ENCODE measurements at regions of chr11 and their contacts with region 1.

Region 1: GRCh38 chr11:27698872-27699474 is 1.3 kb downstream of the BDNF start:
- DNase-seq: peak; percentile 97
- H3K4me3 ChIP-seq: peak overlapping the region; percentile 40
- H3K27ac ChIP-seq: no peak overlapping the region
- H3K4me1 ChIP-seq: peaks cover 27% of the 10 kb centered on the region
- H3K27me3 ChIP-seq: peaks cover 97% of the 10 kb centered on the region
- CTCF ChIP-seq: peak; percentile 100

Region 2: DNA sequence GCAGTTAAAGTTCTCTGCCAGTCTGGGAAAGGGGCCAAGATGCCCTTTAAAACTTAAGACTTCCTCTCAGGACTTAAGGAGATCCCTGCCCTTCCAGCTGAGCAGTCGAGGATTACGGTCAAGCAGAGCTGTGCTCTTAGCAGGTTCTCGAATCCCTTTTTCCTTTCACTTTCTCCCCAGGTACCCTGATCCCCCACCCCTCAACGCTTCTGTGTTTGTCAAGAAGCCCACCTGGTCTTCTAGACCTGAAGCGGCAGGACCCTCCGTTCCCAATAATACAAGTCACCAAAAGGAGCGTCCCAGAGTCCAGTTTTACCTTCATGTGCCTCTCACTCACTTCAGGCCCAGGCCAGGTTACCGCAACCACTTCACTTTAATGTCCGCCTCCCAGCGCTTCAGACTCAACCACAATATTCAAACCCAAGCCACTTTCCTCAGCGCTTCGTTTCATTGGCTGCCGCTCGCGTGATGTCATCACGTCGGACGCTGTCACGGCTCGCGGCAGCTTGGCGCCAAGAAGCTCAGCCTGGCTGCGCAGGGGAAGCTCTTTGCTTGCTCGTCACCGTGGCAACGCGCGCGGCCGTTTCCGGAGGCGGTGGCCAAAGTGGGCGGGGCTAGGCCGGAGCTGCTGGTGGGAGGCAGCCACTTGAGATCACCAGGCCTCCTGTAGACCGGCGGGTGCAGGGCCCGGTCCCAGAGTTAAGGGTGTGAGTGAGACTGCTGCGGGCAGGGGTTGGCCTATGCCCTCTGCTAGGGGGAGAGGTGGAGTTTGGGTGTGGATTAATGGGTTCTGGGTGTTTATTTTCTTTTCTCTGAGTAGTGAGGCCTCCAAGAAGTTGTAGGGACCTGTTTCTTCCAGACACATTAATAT is 409.0 kb after region 1 on chr11 and contains the starts of genes KIF18A and METTL15:
- CTCF ChIA-PET with region 1: interaction called, 3 read pairs
- POLR2A ChIA-PET with region 1: no interaction called
- intact Hi-C with region 1: loop called (anchors 5 kb)
- DNase-seq: peak; percentile 100
- H3K4me3 ChIP-seq: peak within 1 kb of the TSS; percentile 57
- H3K27ac ChIP-seq: peak within 1 kb of the TSS; percentile 86
- H3K4me1 ChIP-seq: peaks cover 59% of the 10 kb centered on the region
- H3K27me3 ChIP-seq: no peaks in the 10 kb centered on the region
- CTCF ChIP-seq: no peak
- total RNA-seq, gene KIF18A: 103 and 117 TPM in 2 replicates
- total RNA-seq, gene METTL15: 31.3 and 36.6 TPM in 2 replicates

Region 3: DNA sequence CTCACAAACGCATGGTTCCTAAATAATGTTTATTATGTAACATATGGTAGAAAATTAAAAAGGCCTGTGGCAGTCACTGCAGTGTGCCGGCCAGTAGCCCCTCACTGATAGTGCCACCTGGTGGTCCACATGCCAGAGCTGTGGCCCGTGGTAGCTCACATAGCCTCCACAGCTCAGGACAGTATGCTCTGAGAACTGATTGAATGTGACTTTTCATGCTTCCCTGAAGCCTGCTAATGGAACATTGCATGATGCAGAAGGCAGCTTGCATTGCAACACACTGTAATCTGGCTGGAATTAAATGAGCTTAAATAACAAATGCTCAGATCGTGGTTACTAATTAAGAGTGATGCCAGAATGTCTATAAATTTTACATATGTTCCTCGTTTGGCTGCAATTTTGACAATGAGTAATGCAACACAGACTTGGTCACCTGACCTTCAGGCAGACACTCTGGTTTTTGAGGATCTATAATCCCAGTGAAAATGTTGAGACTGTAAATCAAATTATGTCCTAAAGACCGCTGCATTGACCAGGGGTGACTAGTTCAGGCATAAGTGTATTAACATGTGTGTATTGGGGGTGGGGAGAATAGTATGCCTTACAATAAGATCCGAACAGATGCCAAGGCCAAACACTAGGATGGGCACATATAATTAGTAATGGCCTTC is 975.6 kb after region 1 on chr11:
- CTCF ChIA-PET with region 1: interaction called, 8 read pairs
- POLR2A ChIA-PET with region 1: no interaction called
- intact Hi-C with region 1: loop called (anchors 2 kb)
- DNase-seq: peak; percentile 83
- H3K4me3 ChIP-seq: no peak overlapping the region
- H3K27ac ChIP-seq: peak overlapping the region; percentile 2
- H3K4me1 ChIP-seq: peaks cover 16% of the 10 kb centered on the region
- H3K27me3 ChIP-seq: no peaks in the 10 kb centered on the region
- CTCF ChIP-seq: peak; percentile 97

Region 4: DNA sequence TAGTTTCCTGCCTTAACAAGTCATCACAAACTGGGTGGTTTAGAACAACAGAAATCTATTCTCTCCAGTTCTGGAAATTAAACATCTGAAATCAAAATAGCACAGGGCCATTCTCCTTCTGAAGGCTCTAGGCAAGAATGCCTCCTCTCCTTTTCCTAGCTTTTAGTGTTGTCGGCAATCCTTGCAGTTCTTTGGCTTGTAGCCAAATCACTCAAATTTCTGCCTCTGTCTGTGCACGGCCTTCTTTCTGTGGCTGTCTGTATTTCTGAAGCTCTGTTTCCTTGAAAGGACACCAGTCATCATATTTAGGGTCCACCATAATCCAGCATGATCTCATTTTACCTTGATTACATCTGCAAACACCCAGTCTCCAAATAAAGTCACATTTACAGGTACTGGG is 1204.7 kb after region 1 on chr11:
- CTCF ChIA-PET with region 1: no interaction called
- POLR2A ChIA-PET with region 1: no interaction called
- intact Hi-C with region 1: loop called (anchors 10 kb)
- DNase-seq: peak; percentile 78
- H3K4me3 ChIP-seq: no peak overlapping the region
- H3K27ac ChIP-seq: no peak overlapping the region
- H3K4me1 ChIP-seq: no peaks in the 10 kb centered on the region
- H3K27me3 ChIP-seq: no peaks in the 10 kb centered on the region
- CTCF ChIP-seq: no peak

Region 5: DNA sequence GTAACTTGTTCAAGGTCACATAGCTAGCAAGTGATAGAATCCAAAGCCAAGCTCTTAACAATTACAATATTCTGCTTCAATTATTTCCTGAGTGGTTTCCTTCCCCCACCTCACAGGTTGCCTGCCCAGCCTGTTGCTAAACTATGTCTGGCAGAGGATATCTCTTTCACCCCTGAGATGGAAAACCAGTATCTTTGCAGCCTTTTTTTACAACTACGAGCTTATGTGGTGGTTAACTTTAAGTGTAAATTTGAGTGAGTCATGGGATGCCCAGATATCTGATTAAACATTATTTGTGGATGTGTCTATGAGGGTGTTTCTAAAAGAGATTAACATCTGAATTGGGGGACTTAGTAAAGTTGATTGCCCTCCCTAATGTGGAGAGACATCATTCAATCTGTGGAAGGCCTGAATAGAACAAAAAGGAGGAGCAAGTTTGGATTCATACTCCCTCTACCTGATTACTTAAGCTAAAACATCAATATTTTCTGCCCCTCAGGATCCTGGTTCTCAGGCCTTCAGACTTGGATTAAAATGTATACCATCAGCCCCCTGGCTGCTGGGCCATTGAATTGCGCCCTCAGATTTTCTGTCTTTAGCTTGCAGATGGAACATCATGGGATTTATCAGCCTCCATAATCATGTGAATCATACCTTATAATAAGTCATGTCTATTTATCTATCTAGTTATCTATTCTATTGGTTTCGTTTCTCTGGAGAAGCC is 1321.1 kb after region 1 on chr11:
- CTCF ChIA-PET with region 1: no interaction called
- POLR2A ChIA-PET with region 1: no interaction called
- intact Hi-C with region 1: loop called (anchors 5 kb)
- DNase-seq: peak; percentile 82
- H3K4me3 ChIP-seq: no peak overlapping the region
- H3K27ac ChIP-seq: no peak overlapping the region
- H3K4me1 ChIP-seq: no peaks in the 10 kb centered on the region
- H3K27me3 ChIP-seq: no peaks in the 10 kb centered on the region
- CTCF ChIP-seq: peak; percentile 97

Region 6: DNA sequence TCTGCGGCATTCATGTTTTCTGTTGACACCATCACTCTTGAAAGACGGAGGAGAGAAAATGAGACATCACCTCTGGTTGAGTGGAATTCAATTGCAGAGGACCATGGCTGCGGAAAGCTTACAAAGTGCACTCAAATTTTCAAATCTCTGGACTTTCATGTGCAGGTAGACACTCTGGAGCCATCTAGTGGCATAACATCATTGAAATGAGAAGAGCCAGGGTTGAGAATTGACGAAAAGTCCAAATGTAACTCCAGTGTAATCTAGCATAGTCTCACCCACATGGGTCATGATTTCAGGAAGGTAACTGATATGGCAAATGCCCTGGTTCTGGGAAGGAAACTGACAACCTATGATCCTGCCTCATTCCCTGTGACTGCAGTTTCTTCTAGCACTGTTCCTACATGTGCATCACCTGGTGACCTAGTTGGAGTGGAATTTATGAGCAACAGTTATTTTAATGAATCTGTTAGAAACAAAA is 1630.0 kb after region 1 on chr11:
- CTCF ChIA-PET with region 1: interaction called, 45 read pairs
- POLR2A ChIA-PET with region 1: interaction called, 15 read pairs
- intact Hi-C with region 1: loop called (anchors 1 kb)
- DNase-seq: peak; percentile 90
- H3K4me3 ChIP-seq: no peak overlapping the region
- H3K27ac ChIP-seq: no peak overlapping the region
- H3K4me1 ChIP-seq: no peaks in the 10 kb centered on the region
- H3K27me3 ChIP-seq: peaks cover 35% of the 10 kb centered on the region
- CTCF ChIP-seq: peak; percentile 99

Measured in A673 (cell line).